Left colon (tissue), 2 donors: ENCODE measurements at regions of chr7 and their contacts with region 1.

Region 1: DNA sequence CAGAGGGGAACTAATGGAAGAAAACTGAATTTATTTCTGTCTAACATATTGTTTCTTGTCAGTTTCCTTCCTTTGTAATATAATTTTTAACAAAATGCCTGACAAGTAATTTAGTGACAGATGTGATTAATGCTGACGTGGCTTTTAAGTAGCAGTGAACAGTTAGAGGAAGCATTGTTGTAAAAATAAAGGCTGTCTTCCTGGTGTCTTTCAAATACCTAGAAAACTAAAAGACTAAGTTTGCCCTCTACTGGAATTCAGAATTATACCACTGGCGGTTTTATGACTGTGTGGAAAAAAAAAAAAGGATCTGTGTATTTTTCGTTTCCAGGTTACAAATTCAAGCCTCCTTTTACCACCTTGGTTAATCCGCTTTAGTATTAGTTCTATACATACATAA is 217.1 kb upstream of the DPP6 start:
- DNase-seq: no peak
- ATAC-seq: peak; percentile 68

Region 2: GRCh38 chr7:153381275-153382040 is 453.6 kb before region 1 on chr7:
- intact Hi-C with region 1: loop called in 1 of 2 experiments (anchors 5 kb)
- DNase-seq: peak in 1 of 2 donors; percentile 11
- ATAC-seq: peak; percentile 43

Region 3: DNA sequence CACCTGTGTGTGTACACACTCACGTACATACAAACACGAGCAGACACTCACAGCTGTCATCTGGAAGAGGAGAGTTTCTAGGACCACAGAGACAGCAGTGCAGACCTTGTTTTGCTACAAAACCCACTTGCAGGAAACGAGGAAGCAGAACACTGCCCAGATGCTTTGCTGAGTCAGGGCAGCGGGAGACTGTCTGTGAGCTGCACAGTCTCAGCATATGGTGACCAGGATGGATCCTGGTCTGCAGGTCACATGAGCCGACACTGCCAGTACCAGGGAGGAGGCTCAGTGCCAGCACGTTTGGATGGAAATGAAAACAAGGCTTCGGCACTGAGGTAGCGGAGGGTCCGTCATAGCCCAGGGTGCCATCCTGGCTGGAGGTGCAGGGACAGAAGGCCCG is 99.5 kb after region 1 on chr7:
- intact Hi-C with region 1: no loop called
- DNase-seq: no peak
- ATAC-seq: no peak